Activated T-helper 1 cell treated with anti-CD3 and anti-CD28 coated beads, Interleukin-12 subunit alpha, Interleukin-12 subunit beta, Interleukin-2, Interleukin-4 antibody, amounts not matched to agents 30 ng/mL and 10 ng/mL and 1 ng/mL, durations not matched to agents 14 hours and 24 hours and 36 hours (primary cell): ENCODE measurements at regions of chr11 and their contacts with region 1.

Region 1: DNA sequence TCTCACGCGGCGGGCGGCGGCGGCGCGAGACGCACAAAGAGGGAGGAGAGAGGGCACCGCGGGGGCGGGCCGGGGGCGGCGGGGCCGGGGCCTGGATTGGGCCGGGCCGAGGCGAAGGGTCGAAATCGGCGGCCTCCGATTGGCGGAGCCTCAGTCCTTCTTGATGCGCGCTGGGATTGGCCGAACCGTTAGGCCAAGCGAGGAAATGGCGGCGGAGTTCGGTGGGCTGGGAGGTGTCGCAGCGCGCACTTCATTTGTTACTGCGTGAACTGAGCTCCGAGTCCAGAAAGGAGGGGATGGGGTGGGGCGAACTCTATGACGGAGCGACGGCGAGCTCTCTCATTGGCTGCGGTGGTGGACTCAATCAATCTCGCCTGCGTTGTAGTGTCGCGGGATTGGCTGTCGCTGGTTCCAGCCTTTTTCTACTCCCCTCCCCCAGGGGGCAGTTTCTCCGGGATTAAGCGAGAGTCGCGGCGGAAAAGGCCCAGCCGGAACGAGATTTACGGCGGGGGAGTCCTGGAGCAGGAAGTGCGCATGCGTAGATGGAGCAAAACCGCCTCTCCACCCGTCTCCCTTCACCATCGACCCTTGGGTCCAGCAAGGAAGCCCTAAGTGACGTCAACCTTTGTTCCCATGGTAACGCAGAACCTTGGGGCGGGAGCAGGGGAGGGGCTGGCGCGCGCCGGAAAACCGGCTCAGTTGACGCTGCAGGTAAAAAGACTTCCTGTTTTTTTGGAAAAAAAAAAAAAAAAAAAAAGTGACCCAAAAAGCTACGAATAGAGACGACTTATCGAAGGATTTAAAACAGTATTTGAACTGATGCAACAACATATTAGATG is at the start of gene SF1:
- DNase-seq: peak; percentile 99
- H3K4me3 Mint-ChIP-seq: peak within 1 kb of the TSS; percentile 87
- H3K27ac Mint-ChIP-seq: peak within 1 kb of the TSS; percentile 97
- H3K4me1 Mint-ChIP-seq: peaks cover 57% of the 10 kb centered on the region
- H3K27me3 Mint-ChIP-seq: peaks cover 2% of the 10 kb centered on the region
- total RNA-seq, gene SF1: 518 and 538 TPM in 2 replicates

Region 2: DNA sequence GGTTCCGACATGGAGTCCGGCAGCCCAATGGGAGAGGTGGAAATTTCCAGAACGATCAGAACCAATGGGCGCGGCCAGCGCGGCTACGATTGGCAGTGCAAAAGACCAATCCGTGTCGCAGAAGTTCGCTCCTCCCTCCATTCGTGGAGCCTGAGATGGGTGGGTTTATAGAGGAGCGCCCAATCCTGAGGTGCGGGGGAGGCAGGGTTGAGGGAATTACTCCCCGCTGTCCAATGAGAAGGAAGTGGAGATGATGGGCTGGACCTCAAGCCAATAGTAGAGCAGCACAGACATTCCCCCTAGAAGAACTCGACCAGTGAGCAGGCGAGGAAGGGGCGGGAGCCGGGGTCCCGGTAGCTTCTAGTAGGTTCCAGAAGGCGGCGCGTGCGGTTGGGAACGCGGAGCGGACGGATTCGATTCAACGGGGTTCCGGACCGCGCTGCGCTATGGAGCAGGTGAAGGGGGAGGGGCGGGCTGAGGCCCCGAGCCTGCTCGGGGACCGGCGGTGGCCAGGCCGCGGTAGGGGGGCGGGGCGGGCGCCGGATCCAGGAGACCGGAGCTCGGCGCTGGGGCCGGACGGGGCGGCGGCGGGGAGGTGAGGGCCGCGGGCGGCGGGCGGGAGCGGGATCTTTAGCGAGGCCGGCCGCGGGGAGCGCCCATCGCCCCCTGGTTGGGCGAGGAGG is 592.8 kb before region 1 on chr11 and contains the start of gene STIP1:
- intact Hi-C with region 1: loop called (anchors 2 kb)
- DNase-seq: peak; percentile 99
- H3K4me3 Mint-ChIP-seq: peak within 1 kb of the TSS; percentile 95
- H3K27ac Mint-ChIP-seq: peak within 1 kb of the TSS; percentile 99
- H3K4me1 Mint-ChIP-seq: peaks cover 39% of the 10 kb centered on the region
- H3K27me3 Mint-ChIP-seq: peaks cover 2% of the 10 kb centered on the region
- total RNA-seq, gene STIP1: 493 and 495 TPM in 2 replicates

Region 3: GRCh38 chr11:64723117-64723906 is 55.4 kb before region 1 on chr11 and contains the start of gene NRXN2:
- intact Hi-C with region 1: no loop called
- DNase-seq: peak; percentile 90
- H3K4me3 Mint-ChIP-seq: peak within 1 kb of the TSS; percentile 62
- H3K27ac Mint-ChIP-seq: peak within 1 kb of the TSS; percentile 52
- H3K4me1 Mint-ChIP-seq: peaks cover 13% of the 10 kb centered on the region
- H3K27me3 Mint-ChIP-seq: peaks cover 41% of the 10 kb centered on the region
- total RNA-seq, gene NRXN2: 0.17 and 0.23 TPM in 2 replicates

Region 4: DNA sequence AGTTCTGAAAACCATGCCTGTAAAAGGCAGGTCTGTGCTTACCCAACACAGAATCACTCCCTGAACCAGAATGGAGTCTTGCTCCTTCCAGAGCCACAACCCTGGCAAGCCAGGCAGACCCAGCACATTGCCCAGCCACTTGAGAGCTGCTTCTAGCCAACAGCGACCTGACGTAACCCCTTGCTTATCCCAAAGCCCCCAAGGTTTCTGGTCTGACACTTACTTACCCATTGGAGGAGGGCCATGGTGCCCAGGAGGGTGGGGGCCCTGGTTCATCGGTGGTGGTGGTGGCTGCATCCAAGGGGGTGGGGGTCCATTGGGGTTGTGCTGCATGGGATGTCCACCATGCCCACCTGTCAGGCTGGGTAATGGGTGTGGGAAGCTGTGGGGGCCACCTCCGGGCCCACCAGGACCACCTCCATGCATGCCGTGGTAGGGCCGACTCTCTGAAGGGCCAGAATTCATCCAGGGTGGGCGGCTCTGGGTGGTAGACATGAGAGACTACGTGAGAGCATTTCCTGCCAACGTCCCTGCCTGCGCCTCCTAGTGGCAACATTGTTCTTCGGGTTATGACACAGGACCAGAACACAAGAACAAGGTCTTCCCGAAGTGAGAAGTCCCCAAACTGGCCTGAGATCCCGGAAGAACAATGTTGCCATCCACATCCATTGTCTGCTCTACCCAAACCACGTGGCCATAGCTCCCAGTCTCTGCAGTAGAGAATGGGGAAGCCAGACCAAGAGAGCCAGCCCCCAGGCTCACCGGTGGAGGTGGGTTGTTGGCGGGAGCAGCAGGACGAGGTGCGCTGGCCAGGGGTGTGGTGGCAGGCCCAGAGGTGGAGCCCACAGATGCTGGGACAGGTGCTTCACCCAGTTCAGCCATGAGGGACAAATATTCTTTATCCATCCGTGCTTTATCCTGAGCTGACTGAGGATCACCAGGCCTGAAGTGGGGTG is 11.1 kb before region 1 on chr11:
- intact Hi-C with region 1: loop called (anchors 1 kb)
- DNase-seq: peak; percentile 71
- H3K4me3 Mint-ChIP-seq: no peak overlapping the region
- H3K27ac Mint-ChIP-seq: peak overlapping the region; percentile 21
- H3K4me1 Mint-ChIP-seq: peaks cover 86% of the 10 kb centered on the region
- H3K27me3 Mint-ChIP-seq: no peaks in the 10 kb centered on the region

Region 5: DNA sequence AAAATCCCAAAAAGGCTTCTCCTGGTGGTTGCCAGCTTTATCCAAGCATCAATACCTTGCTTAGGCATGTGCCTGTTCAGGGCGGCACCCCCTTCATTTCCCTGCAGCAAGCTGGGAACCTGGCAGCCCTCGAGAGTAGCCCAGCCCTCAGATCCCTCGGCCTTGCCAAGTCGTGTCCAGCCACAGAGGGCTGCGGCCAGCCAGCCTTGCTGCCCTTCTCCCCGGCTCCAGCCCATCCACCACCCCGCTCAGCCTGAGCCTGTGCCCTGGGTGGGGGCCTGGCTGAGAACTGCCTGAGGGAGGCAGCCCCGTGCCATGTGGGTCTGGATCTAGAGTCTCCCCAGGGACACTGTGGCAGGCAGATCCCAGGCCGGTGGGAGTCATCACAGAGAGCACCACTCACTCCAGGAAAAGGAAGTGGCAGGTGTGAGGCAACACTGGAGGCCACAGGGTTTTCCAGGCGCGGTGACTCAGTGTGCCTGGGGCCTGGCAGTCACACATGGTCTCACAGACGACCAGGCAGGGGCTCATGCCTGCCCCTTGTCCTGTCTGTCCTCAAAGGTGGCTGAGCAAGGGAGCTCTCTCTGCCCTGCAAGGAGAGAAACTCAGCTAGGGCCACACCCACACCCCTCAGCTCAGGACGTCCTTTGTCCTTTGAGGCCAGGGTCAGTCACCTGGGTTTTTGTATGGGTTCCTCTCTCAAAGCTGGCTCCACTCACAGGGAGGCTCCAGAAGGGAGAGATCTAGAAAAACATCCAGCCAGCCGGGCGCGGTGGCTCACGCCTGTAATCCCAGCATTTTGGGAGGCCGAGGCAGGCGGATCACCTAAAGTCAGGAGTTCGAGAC is 77.9 kb after region 1 on chr11:
- intact Hi-C with region 1: loop called (anchors 1 kb)
- DNase-seq: peak; percentile 35
- H3K4me3 Mint-ChIP-seq: peak overlapping the region; percentile 52
- H3K27ac Mint-ChIP-seq: peak overlapping the region; percentile 59
- H3K4me1 Mint-ChIP-seq: peaks cover 78% of the 10 kb centered on the region
- H3K27me3 Mint-ChIP-seq: no peaks in the 10 kb centered on the region

Region 6: DNA sequence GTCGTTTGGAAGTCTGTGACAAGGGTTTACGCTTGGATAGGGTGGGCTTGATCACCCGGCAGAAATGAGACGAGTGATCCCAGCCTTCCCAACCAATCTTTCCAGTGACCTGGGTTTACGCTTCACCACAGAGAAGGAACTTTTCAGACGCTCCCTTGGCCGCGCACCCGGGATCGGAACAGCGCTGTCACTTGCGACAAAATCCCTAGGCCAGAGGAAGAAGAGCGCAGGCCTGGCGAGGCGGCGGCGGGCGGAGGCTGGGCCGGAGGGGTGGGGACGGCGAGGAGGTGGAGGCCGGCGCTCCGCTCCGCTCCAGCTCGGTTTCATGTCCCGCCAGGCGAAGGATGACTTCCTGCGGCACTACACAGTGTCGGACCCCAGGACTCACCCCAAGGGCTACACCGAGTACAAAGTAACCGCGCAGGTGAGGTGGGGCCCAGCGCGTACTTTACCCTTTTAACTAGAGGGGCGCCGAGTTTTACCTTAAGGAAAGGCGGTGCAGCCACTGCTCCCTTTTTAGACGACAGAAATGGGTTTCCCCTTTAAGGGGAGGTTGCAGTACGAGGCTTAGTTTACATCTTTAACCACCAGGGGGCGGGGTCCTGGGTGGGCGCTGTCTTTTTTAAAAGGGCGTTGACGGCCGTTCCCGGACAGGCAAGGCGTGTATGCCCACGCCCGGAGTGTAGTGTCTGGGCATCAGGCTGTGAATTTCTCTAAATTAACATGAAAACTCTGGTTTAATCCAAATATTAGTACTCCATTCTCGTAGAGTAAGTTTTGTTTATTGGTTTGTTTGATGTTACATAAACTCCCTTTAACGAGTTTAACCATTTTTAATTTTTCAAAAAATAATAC is 248.7 kb after region 1 on chr11 and contains the start of gene SNX15:
- intact Hi-C with region 1: loop called (anchors 5 kb)
- DNase-seq: peak; percentile 91
- H3K4me3 Mint-ChIP-seq: peak within 1 kb of the TSS; percentile 83
- H3K27ac Mint-ChIP-seq: peak within 1 kb of the TSS; percentile 83
- H3K4me1 Mint-ChIP-seq: peaks cover 23% of the 10 kb centered on the region
- H3K27me3 Mint-ChIP-seq: no peaks in the 10 kb centered on the region
- total RNA-seq, gene SNX15: 19.9 and 30.9 TPM in 2 replicates

Region 7: GRCh38 chr11:65261591-65262380 is 483.1 kb after region 1 on chr11 and contains the start of gene POLA2:
- intact Hi-C with region 1: loop called (anchors 1 kb)
- DNase-seq: peak; percentile 97
- H3K4me3 Mint-ChIP-seq: peak within 1 kb of the TSS; percentile 94
- H3K27ac Mint-ChIP-seq: peak within 1 kb of the TSS; percentile 97
- H3K4me1 Mint-ChIP-seq: peaks cover 47% of the 10 kb centered on the region
- H3K27me3 Mint-ChIP-seq: no peaks in the 10 kb centered on the region
- total RNA-seq, gene POLA2: 78.2 and 78.9 TPM in 2 replicates